ENCODE measurements at regions of chr19 and their contacts with region 1.

Region 1: DNA sequence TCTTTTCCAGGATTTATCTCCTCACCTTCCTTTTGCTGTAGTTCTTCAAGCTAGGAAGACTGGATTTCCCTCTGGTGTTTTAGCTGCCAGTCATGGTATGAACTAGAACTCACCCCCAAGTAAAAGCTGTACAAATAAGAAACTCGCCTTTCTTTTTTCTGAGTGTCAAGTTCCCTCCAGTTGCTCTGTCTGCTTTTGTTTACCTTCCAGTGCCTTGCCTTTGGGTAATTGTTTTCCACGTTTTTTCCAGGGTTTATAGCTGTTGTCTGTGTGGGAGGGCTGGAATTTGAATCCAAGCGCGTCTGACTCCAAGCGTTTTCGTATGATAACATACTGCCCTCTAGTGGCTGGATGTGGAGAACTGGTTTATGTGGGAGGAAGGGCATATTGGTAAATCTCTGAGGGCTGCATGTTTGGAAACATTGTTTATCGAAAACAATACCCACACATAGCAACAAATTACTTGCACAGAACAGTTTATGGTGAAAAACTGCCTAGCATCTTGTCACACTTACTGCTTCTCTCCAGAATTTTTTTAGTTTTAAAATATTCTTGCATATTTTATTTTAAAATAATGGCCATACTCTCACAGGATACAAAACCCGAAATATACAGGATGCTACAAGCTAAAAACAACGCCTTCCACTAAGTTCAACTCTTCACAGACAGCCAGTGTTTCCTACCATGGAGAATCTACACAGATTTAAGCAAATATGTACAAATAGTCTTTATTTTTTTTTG is 19.2 kb downstream of the RCN3 start:
- DNase-seq: peak; percentile 42 to 92
- ATAC-seq: peak; percentile 82 to 95 (median 90)
- H3K4me3 ChIP-seq: no peak overlapping the region
- H3K4me3 Mint-ChIP-seq: peak overlapping the region; percentile 14
- H3K27ac ChIP-seq: no peak overlapping the region
- H3K27ac Mint-ChIP-seq: peak overlapping the region in 1 of 2 donors; percentile 19
- H3K4me1 ChIP-seq: peaks cover 8% of the 10 kb centered on the region
- H3K4me1 Mint-ChIP-seq: peaks cover 5 to 20% of the 10 kb centered on the region in 2 donors
- H3K27me3 ChIP-seq: no peaks in the 10 kb centered on the region
- H3K27me3 Mint-ChIP-seq: peaks cover 0 to 2% of the 10 kb centered on the region in 2 donors
- CTCF ChIP-seq: peak; percentile 80

Region 2: DNA sequence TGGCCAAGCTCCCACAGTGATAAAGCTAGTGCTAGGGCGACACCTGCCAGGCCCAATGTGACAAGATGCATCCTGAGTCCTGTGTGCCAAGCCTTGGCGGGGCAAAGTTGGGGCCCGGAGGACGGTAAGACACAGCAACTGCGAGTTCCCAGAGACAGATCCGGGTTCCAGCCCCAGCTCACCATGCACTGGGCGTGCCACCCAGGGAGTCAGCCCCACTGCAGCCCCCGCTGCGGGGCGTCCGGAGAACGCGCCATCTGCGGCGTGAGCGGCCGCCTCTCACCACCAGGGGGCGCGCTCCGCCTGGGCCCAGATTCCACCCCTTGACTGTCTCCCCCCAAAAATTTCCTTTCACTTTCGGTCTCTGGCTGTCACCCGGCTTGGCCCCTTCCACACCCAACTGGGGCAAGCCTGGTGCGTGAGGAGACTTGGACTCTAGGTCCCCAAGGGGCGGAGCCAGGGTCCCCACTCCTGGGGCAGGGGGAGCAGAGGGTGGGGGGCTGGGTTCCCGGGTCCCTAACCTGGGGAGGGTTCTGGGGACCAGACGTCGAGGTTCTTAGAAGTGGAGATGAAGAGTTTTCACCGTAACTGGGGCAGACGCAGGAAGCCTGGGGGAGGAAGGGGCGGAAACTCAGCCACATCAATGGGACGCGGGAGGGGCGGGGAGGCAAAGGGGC is 73.0 kb before region 1 on chr19 and contains the start of gene FLT3LG:
- intact Hi-C with region 1: loop called (anchors 1 kb)
- DNase-seq: peak; percentile 90 to 97
- ATAC-seq: peak; percentile 55 to 83 (median 65)
- H3K4me3 ChIP-seq: peak within 1 kb of the TSS; percentile 67
- H3K4me3 Mint-ChIP-seq: peak within 1 kb of the TSS; percentile 95
- H3K27ac ChIP-seq: peak within 1 kb of the TSS; percentile 89
- H3K27ac Mint-ChIP-seq: peak within 1 kb of the TSS; percentile 88 to 94
- H3K4me1 ChIP-seq: peaks cover 70% of the 10 kb centered on the region
- H3K4me1 Mint-ChIP-seq: peaks cover 31 to 55% of the 10 kb centered on the region in 2 donors
- H3K27me3 ChIP-seq: no peaks in the 10 kb centered on the region
- H3K27me3 Mint-ChIP-seq: no peaks in the 10 kb centered on the region
- CTCF ChIP-seq: peak; percentile 94
- total RNA-seq, gene FLT3LG: 44.7 to 65.7 (median 64.8) TPM

Region 3: DNA sequence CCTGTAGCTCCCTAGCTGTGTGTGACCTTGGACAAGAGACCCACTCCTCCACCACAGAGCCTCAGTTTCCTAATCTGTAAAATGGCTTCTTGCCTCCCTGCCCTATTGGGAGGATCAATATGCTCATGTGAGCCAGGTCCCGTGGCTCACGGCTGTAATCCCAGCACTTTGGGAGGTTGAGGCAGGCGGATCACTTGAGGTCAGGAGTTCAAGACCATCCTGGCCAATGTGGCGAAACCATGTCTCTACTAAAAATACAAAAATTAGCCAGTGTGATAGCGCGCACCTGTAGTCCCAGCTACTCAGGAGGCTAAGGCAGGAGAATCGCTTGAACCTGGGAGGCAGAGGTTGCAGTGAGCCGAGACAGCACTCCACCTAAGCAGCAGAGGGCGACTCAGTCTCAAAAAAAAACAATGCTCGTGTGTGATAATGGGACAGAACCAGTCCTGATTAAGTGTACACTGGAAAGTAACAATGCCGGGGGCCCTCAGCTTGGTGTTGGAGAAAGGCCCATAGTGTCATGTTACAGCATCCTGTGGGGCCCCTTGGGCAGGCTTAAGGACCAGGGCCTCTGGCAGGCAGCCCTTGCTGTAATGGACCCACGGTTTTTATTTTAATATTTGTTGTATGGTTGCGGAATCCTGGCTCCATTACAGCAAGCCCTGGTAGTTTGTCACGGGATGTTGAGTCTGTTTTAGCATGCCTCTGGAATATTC is 44.0 kb before region 1 on chr19:
- intact Hi-C with region 1: loop called (anchors 1 kb)
- DNase-seq: peak in 1 of 2 donors; percentile 82
- ATAC-seq: peak in 1 of 3 donors; percentile 11
- H3K4me3 ChIP-seq: no peak overlapping the region
- H3K4me3 Mint-ChIP-seq: no peak overlapping the region
- H3K27ac ChIP-seq: peak overlapping the region; percentile 83
- H3K27ac Mint-ChIP-seq: peak overlapping the region; percentile 97
- H3K4me1 ChIP-seq: peaks cover 60% of the 10 kb centered on the region
- H3K4me1 Mint-ChIP-seq: peaks cover 30 to 48% of the 10 kb centered on the region in 2 donors
- H3K27me3 ChIP-seq: no peaks in the 10 kb centered on the region
- H3K27me3 Mint-ChIP-seq: no peaks in the 10 kb centered on the region
- CTCF ChIP-seq: peak; percentile 60